B cell (primary cell): ENCODE measurements at regions of chr19 and their contacts with region 1.

Region 1: DNA sequence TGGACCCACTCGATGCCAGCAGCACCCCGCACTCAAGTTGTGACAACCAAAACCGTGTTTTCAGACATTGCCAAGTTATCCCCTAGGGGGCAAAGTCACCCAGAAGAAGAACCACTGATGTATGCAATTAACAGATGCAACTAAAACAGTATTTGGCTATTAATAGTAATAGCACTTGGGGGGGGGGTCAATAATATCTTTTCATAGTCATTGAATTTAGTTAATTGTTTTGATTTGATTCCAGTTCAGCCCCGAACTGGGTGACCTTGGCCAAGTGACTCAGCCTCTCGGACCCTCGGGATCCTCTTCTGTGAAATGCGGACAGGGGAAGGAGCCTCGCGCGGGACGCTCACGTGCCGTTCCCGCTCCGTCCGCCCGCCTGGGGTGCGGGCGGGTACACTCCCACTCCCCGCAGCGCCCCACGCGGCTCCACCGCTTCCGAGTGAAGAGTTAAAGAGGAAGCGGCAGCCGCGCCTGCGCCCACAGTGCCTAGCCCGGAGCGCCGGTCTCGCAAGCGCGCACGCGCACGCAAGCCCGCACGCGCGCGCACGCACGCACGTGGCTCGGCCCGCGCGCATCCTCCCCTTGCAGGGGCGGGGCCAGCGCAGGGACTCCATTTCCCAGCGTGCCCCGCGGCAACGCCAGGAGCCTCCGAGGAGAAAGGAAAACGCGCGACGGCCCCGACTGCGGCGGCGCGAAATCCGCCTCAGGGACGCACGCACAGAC is 449 bp upstream of the DAZAP1 start:
- DNase-seq: peak; percentile 100
- ATAC-seq: peak; percentile 84
- H3K4me3 ChIP-seq: peak overlapping the region in 4 of 5 experiments; percentile 45 to 72 (median 58)
- H3K4me3 Mint-ChIP-seq: peak overlapping the region; percentile 85
- H3K27ac ChIP-seq: peak overlapping the region; percentile 64 to 69
- H3K27ac Mint-ChIP-seq: peak overlapping the region; percentile 92
- H3K4me1 ChIP-seq: peaks cover 31 to 52% of the 10 kb centered on the region in 2 donors
- H3K4me1 Mint-ChIP-seq: peaks cover 45% of the 10 kb centered on the region
- H3K27me3 ChIP-seq: peaks cover 0 to 22% (median 5%) of the 10 kb centered on the region in 4 experiments
- H3K27me3 Mint-ChIP-seq: peaks cover 4% of the 10 kb centered on the region
- CTCF ChIP-seq: peak; percentile 63

Region 2: GRCh38 chr19:572140-572742 is 834.7 kb before region 1 on chr19 and contains the start of gene BSG:
- CTCF ChIA-PET with region 1: no interaction called
- POLR2A ChIA-PET with region 1: no interaction called
- intact Hi-C with region 1: loop called (anchors 5 kb)
- DNase-seq: peak; percentile 99
- ATAC-seq: peak; percentile 78
- H3K4me3 ChIP-seq: peak within 1 kb of the TSS; percentile 69 to 89 (median 81)
- H3K4me3 Mint-ChIP-seq: peak within 1 kb of the TSS; percentile 99
- H3K27ac ChIP-seq: peak within 1 kb of the TSS; percentile 85 to 89
- H3K27ac Mint-ChIP-seq: peak within 1 kb of the TSS; percentile 99
- H3K4me1 ChIP-seq: peaks cover 19 to 33% of the 10 kb centered on the region in 2 donors
- H3K4me1 Mint-ChIP-seq: peaks cover 35% of the 10 kb centered on the region
- H3K27me3 ChIP-seq: no peaks in the 10 kb centered on the region
- H3K27me3 Mint-ChIP-seq: no peaks in the 10 kb centered on the region
- CTCF ChIP-seq: no peak
- total RNA-seq, gene BSG: 131 and 144 TPM in 2 replicates

Region 3: GRCh38 chr19:1275260-1275975 is 131.5 kb before region 1 on chr19 and contains the start of gene FAM174C:
- CTCF ChIA-PET with region 1: interaction called, 4 read pairs
- POLR2A ChIA-PET with region 1: no interaction called
- intact Hi-C with region 1: loop called (anchors 2 kb)
- DNase-seq: peak; percentile 99
- ATAC-seq: peak; percentile 82
- H3K4me3 ChIP-seq: peak within 1 kb of the TSS; percentile 30 to 85 (median 75)
- H3K4me3 Mint-ChIP-seq: peak within 1 kb of the TSS; percentile 89
- H3K27ac ChIP-seq: peak within 1 kb of the TSS; percentile 93 to 97
- H3K27ac Mint-ChIP-seq: peak within 1 kb of the TSS; percentile 94
- H3K4me1 ChIP-seq: peaks cover 39 to 63% of the 10 kb centered on the region in 2 donors
- H3K4me1 Mint-ChIP-seq: peaks cover 49% of the 10 kb centered on the region
- H3K27me3 ChIP-seq: no peaks in the 10 kb centered on the region
- H3K27me3 Mint-ChIP-seq: no peaks in the 10 kb centered on the region
- CTCF ChIP-seq: peak; percentile 15
- total RNA-seq, gene FAM174C: 34.5 and 41.1 TPM in 2 replicates

Region 4: GRCh38 chr19:1354977-1355567 is 51.9 kb before region 1 on chr19:
- CTCF ChIA-PET with region 1: no interaction called
- POLR2A ChIA-PET with region 1: interaction called, 5 read pairs
- intact Hi-C with region 1: loop called (anchors 1 kb)
- DNase-seq: no peak
- ATAC-seq: peak; percentile 48
- H3K4me3 ChIP-seq: peak overlapping the region; percentile 35 to 78 (median 72)
- H3K4me3 Mint-ChIP-seq: peak overlapping the region; percentile 93
- H3K27ac ChIP-seq: peak overlapping the region in 1 of 2 donors; percentile 58
- H3K27ac Mint-ChIP-seq: peak overlapping the region; percentile 70
- H3K4me1 ChIP-seq: peaks cover 9 to 18% of the 10 kb centered on the region in 2 donors
- H3K4me1 Mint-ChIP-seq: peaks cover 18% of the 10 kb centered on the region
- H3K27me3 ChIP-seq: no peaks in the 10 kb centered on the region
- H3K27me3 Mint-ChIP-seq: no peaks in the 10 kb centered on the region
- CTCF ChIP-seq: no peak

Region 5: DNA sequence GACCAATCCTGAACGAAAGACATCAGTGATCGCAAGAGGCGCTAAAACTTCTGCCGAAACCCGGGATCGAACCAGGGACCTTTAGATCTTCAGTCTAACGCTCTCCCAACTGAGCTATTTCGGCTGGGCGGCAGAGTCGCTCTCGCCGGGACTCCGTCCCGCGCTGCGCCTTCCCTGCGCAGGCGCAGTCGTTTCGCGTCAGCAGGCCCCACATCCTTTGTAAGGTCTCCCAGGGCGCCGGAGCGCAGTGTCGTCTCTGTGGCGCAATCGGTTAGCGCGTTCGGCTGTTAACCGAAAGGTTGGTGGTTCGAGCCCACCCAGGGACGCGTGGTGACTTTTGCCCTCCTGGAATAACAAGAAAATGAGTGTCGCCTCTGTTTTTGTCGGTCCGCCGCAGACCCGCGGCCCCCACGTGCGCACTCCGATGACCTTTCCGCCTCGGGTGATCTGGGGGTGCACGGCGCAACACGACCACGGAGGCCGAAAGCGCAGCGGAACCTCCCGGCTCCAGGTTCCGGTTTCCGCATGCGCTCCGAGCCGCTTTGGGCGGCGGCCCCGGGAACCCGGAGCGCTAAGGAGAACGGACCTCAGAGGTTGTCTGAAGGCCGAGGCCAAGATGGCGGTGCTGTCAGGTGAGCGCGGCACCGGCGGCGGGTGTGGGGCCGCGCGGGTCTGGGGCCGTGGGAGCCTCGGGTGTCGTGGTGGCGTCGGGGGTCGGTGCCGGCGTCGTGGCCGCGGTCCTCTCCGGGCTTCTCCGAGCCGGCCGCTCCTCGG is 23.4 kb before region 1 on chr19 and contains the start of gene NDUFS7:
- CTCF ChIA-PET with region 1: interaction called, 5 read pairs
- POLR2A ChIA-PET with region 1: no interaction called
- intact Hi-C with region 1: loop called (anchors 1 kb)
- DNase-seq: peak; percentile 97
- ATAC-seq: peak; percentile 82
- H3K4me3 ChIP-seq: peak within 1 kb of the TSS; percentile 54 to 93 (median 76)
- H3K4me3 Mint-ChIP-seq: peak within 1 kb of the TSS; percentile 90
- H3K27ac ChIP-seq: peak within 1 kb of the TSS; percentile 76 to 85
- H3K27ac Mint-ChIP-seq: peak within 1 kb of the TSS; percentile 100
- H3K4me1 ChIP-seq: peaks cover 11 to 15% of the 10 kb centered on the region in 2 donors
- H3K4me1 Mint-ChIP-seq: peaks cover 17% of the 10 kb centered on the region
- H3K27me3 ChIP-seq: no peaks in the 10 kb centered on the region
- H3K27me3 Mint-ChIP-seq: peaks cover 3% of the 10 kb centered on the region
- CTCF ChIP-seq: peak; percentile 14
- total RNA-seq, gene NDUFS7: 58.8 and 59.0 TPM in 2 replicates

Region 6: DNA sequence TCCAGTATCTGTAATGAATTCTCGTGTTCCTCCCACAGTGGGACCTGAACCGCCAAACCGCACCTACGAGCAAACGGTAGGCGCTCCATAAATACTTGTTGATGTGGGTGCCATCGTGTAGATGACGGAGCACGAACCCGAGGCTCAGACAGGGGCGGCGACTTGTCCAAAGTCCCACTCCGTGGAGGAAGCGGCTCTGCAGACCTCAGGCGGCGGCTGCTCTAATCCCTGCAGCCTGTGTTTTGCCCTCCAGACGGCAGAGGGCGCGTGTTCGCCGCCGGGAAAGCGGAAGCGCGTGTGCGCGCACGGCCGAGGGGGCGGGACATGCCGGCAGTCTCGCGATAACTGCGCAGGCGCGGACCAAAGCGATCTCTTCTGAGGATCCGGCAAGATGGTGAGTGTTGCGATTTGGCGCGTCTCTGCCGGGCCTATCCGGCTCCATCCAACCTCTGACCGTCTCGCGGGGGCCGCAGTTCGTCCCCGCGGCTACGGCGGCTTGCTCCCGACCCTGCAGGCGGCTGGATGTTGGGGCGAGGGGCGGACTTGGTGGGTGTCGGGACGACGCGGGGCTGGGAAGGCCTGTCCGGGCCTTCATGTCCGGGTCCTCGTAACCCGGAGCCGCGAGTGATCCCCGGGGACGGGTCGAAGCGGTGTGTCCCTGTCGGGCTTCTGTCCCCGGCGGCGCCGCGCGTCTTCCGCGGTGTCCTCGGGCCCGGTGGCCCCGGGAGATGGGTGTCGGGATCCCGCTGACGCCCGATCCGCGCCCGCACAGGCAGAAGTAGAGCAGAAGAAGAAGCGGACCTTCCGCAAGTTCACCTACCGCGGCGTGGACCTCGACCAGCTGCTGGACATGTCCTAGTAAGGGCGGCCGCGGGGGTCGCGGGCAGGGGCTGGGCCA is 31.3 kb after region 1 on chr19 and contains the start of gene RPS15:
- CTCF ChIA-PET with region 1: interaction called, 4 read pairs
- POLR2A ChIA-PET with region 1: no interaction called
- intact Hi-C with region 1: loop called (anchors 1 kb)
- DNase-seq: peak; percentile 98
- ATAC-seq: peak; percentile 94
- H3K4me3 ChIP-seq: peak within 1 kb of the TSS; percentile 45 to 100 (median 97)
- H3K4me3 Mint-ChIP-seq: peak within 1 kb of the TSS; percentile 99
- H3K27ac ChIP-seq: peak within 1 kb of the TSS; percentile 94 to 95
- H3K27ac Mint-ChIP-seq: peak within 1 kb of the TSS; percentile 99
- H3K4me1 ChIP-seq: peaks cover 7 to 16% of the 10 kb centered on the region in 2 donors
- H3K4me1 Mint-ChIP-seq: peaks cover 18% of the 10 kb centered on the region
- H3K27me3 ChIP-seq: no peaks in the 10 kb centered on the region
- H3K27me3 Mint-ChIP-seq: no peaks in the 10 kb centered on the region
- CTCF ChIP-seq: peak; percentile 95
- total RNA-seq, gene RPS15: 1,488 and 1,520 TPM in 2 replicates

Region 7: GRCh38 chr19:1478934-1479707 is 72.2 kb after region 1 on chr19 and contains the start of gene C19orf25:
- CTCF ChIA-PET with region 1: no interaction called
- POLR2A ChIA-PET with region 1: no interaction called
- intact Hi-C with region 1: loop called (anchors 2 kb)
- DNase-seq: peak; percentile 94
- ATAC-seq: peak; percentile 94
- H3K4me3 ChIP-seq: peak within 1 kb of the TSS; percentile 50 to 92 (median 79)
- H3K4me3 Mint-ChIP-seq: peak within 1 kb of the TSS; percentile 97
- H3K27ac ChIP-seq: peak within 1 kb of the TSS; percentile 71 to 83
- H3K27ac Mint-ChIP-seq: peak within 1 kb of the TSS; percentile 93
- H3K4me1 ChIP-seq: peaks cover 6 to 22% of the 10 kb centered on the region in 2 donors
- H3K4me1 Mint-ChIP-seq: peaks cover 13% of the 10 kb centered on the region
- H3K27me3 ChIP-seq: no peaks in the 10 kb centered on the region
- H3K27me3 Mint-ChIP-seq: no peaks in the 10 kb centered on the region
- CTCF ChIP-seq: no peak
- total RNA-seq, gene C19orf25: 68.1 and 68.3 TPM in 2 replicates

Region 8: DNA sequence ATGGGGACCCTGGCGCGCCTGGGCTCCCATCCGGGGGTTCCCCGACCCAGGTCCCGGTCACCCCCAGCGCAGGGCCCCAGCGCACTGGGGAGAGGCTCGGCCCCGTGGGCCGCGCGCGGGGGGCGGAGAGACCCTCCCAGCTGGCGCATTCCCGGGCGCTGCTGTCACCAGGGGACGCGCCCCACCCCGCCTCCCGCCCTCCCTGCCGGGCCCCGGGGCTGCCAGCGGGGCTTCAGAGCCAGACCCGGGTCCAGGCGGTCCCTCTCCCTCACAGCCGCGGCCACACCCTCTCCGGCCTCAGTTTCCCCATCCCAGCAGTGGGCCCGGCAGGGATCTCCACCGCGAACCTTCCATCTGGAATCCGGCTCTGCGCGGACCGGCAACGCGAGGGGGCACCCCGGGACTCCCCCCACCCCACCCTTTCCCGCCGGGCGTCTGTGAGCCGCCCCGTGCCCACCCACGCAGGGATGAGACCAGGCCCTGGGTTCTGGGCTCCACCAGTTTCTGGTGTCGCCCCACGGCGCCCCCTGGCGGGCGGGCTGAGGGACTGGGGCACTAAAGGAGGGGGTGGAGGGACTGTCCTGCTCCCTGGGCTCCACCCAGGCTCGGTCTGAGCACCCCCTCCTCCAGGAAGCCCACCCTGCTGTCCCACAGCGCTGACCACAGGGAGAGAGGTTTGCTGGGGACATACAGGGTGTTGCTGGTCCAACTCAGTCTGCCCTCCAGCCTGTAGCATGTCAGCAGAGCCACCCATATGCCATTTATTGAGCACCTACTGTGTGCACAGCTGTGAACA is 106.8 kb after region 1 on chr19:
- CTCF ChIA-PET with region 1: no interaction called
- POLR2A ChIA-PET with region 1: no interaction called
- intact Hi-C with region 1: no loop called
- DNase-seq: peak; percentile 63
- ATAC-seq: peak; percentile 63
- H3K4me3 ChIP-seq: peak overlapping the region in 3 of 5 experiments; percentile 8 to 25 (median 17)
- H3K4me3 Mint-ChIP-seq: peak overlapping the region; percentile 41
- H3K27ac ChIP-seq: no peak overlapping the region
- H3K27ac Mint-ChIP-seq: no peak overlapping the region
- H3K4me1 ChIP-seq: peaks cover 9 to 13% of the 10 kb centered on the region in 2 donors
- H3K4me1 Mint-ChIP-seq: peaks cover 5% of the 10 kb centered on the region
- H3K27me3 ChIP-seq: peaks cover 0 to 58% (median 13%) of the 10 kb centered on the region in 4 experiments
- H3K27me3 Mint-ChIP-seq: peaks cover 38% of the 10 kb centered on the region
- CTCF ChIP-seq: peak; percentile 69